Common myeloid progenitor, CD34-positive (primary cell): ENCODE measurements at regions of chr3 and their contacts with region 1.

Region 1: DNA sequence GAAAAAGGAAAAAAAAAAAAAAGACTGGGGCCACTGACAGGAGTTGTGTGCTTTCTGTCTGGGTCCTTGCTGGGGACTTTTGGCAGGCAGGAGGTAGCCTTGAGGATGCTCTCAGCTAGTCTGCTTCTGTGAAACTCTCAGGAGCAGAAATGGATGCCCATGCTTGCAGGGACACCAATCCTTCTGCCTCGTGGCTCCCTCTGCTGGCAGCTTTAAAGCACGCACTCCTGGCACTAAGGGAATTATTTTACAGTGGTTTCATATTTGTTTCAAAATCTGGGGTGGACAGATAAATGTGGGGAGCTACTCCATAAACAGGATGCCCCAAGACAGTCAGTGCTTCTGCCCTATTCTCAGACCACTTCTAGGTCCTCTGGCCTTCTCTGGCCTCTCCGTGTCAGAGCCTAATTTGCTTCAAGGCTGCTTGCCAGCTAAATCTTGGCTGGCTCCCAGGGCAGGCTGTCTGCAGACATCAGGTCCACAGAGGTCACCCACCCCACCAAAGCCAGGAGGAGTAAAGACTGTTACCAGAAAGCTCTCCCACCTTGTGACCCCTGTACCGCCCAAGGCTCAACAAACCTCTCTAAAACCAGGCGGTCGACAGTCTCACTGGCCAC is 17.1 kb downstream of the TRAIP start:
- DNase-seq: peak; percentile 84 to 94 (median 87)
- H3K4me3 ChIP-seq: no peak overlapping the region
- H3K27ac ChIP-seq: no peak overlapping the region
- H3K4me1 ChIP-seq: peaks cover 0 to 13% (median 6%) of the 10 kb centered on the region in 4 experiments
- H3K27me3 ChIP-seq: no peaks in the 10 kb centered on the region

Region 2: DNA sequence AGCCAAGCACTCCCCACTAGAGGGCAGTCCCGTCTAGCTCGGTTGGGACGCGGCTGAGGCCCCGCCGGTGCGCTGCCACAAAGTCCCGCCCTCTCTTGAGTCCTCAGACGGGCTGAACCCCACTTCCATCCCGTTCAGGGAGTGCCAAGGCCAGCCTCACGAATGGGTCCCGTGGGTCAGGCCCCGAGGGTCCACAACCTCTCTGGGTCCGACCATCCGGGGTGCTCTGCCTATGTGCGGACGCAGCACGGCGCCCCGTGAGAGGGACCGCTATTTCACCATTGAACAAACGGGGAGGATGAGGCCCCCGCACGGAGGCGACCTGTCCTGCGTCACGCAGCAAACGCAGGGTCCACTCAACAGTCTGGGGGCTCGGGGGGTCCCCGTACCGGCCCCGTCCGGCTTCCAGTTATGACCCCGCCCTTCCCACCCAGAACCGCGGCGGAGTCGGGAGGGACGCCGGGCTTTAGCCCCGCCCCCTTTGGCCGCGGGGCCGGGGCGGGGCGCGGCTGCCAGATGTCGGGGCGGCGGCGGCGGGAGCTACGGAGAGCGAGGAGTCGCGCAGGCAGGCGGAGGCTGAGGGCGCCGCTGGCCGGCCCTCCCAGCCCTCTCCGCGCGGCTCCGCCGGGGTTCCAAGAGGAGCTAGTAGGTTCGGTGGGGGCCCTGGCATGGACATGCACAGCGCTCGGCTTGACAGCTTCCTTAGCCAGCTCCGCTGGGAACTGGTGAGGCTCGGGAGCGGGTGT is 36.4 kb before region 1 on chr3 and contains the start of gene INKA1:
- CTCF ChIA-PET with region 1: interaction called, 807 read pairs
- POLR2A ChIA-PET with region 1: interaction called, 111 read pairs
- DNase-seq: peak; percentile 88 to 92 (median 91)
- H3K4me3 ChIP-seq: peak within 1 kb of the TSS; percentile 72 to 95 (median 86)
- H3K27ac ChIP-seq: peak within 1 kb of the TSS; percentile 68 to 92
- H3K4me1 ChIP-seq: peaks cover 7 to 49% (median 46%) of the 10 kb centered on the region in 4 experiments
- H3K27me3 ChIP-seq: no peaks in the 10 kb centered on the region

Region 3: GRCh38 chr3:49856181-49857005 is 17.1 kb after region 1 on chr3 and contains the start of gene TRAIP:
- CTCF ChIA-PET with region 1: interaction called, 11 read pairs
- POLR2A ChIA-PET with region 1: no interaction called
- DNase-seq: peak; percentile 93 to 96 (median 96)
- H3K4me3 ChIP-seq: peak within 1 kb of the TSS; percentile 68 to 90 (median 76)
- H3K27ac ChIP-seq: peak within 1 kb of the TSS; percentile 10 to 67
- H3K4me1 ChIP-seq: peaks cover 3 to 20% (median 14%) of the 10 kb centered on the region in 4 experiments
- H3K27me3 ChIP-seq: no peaks in the 10 kb centered on the region

Region 4: DNA sequence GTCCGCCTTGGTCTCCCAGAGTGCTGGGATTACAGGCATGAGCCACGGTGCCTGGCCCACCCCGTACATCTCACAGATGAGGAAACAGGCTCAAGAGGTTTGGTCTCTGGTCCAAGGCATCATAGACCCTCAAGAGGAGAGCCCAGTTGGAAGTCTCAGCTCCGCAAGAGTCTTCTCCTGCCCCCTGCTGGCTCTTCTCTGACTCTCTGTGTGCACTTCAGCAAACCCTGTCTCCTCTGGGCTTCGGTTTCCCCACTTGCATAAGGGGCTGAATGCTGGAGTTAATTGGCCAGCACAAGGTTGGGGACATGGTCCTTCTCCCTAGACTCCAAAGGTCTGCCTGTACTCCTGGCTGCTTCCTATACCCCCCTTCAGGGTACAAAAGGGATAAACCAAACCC is 60.5 kb after region 1 on chr3:
- CTCF ChIA-PET with region 1: interaction called, 26 read pairs
- POLR2A ChIA-PET with region 1: interaction called, 3 read pairs
- DNase-seq: peak; percentile 29 to 60 (median 54)
- H3K4me3 ChIP-seq: no peak overlapping the region
- H3K27ac ChIP-seq: no peak overlapping the region
- H3K4me1 ChIP-seq: peaks cover 0 to 11% (median 10%) of the 10 kb centered on the region in 4 experiments
- H3K27me3 ChIP-seq: no peaks in the 10 kb centered on the region

Region 5: DNA sequence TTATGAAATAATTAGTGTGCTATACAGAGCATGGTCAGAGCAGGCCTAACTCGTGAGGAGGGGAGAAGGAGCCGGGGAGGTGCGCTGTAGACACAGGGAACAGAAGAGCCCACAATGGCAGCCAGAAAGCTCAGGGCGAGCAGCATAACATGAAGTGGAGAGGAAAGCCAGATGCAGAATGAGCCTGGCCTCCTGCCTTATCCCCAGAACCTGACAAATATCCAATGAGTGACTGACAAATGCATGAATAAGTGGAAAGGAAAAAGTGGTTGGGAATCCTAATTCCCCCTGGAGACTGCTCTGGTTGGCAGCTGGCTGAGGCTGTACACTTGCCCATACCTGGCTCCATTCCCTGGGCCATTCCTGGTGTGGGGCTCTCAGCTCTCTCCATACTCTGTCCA is 73.6 kb after region 1 on chr3:
- CTCF ChIA-PET with region 1: interaction called, 55 read pairs
- POLR2A ChIA-PET with region 1: no interaction called
- DNase-seq: no peak
- H3K4me3 ChIP-seq: no peak overlapping the region
- H3K27ac ChIP-seq: no peak overlapping the region
- H3K4me1 ChIP-seq: no peaks in the 10 kb centered on the region
- H3K27me3 ChIP-seq: no peaks in the 10 kb centered on the region